Mucosa of descending colon (tissue), 3 donors: ENCODE measurements at regions of chr17 and their contacts with region 1.

Region 1: DNA sequence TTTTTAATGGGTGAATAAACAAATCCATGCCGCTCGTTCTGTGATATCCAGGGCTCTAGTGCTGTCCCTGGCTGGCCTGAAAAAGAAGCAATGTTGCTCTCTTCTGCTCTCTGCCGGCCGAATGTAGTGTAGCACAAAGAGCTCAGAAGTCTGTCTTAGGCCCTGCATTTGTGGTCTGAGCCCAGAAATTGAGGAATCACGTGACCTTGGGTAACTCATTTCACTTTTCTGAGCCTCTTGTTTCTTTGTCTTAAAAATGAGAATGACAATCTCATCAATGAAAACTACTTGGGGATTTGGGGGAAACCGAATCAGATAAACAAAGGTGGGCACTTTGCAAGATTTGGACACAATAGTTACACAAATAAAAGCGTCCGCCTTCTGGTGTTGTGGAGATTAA is 381.6 kb upstream of the ASIC2 start:
- DNase-seq: peak in 2 of 3 donors; percentile 60 to 75
- ATAC-seq: peak; percentile 76
- H3K4me3 ChIP-seq: no peak overlapping the region
- H3K4me1 ChIP-seq: no peaks in the 10 kb centered on the region
- CTCF ChIP-seq: peak; percentile 61

Region 2: DNA sequence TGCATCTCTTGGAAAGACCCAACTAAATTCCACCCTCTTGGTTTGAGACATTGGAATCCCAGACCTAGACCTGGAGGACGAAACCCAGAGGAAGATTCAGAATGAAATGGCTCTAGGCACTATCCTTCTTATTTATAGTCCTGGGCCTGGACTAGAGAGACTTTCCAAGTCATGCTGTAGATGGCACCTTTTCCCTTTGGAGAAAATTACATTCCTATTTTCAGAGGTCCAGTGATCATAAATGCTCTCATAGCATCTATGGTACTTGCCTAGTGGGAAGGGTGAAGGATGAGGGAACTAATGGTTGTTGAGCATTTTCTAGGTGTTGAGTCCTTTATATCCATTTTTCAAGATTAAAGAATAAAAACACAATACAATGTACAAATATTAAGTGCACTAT is 645.9 kb before region 1 on chr17:
- intact Hi-C with region 1: loop called in 1 of 2 experiments (anchors 5 kb)
- DNase-seq: no peak
- ATAC-seq: no peak
- H3K4me3 ChIP-seq: no peak overlapping the region
- H3K4me1 ChIP-seq: no peaks in the 10 kb centered on the region
- CTCF ChIP-seq: no peak

Region 3: DNA sequence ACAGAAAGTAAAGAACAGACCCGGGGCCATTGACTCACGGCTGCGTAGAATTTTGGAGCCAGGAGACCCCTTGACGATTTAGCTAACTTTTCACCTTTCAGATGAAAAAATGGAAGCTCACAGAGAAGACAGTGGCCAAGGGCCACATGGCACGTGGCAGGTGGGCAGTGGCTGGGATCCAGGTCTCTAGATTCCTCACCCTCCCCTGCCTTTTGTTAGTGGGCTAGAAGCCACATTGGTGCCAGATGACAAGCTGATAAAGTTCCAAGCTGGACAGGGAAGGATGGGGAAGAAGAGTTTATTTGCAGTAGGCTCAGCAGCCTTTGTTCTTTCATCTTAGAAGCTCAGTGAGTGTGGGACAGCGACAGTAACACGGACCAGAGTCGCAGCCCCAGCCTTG is 577.3 kb before region 1 on chr17:
- intact Hi-C with region 1: loop called in 1 of 2 experiments (anchors 5 kb)
- DNase-seq: no peak
- ATAC-seq: no peak
- H3K4me3 ChIP-seq: no peak overlapping the region
- H3K4me1 ChIP-seq: no peaks in the 10 kb centered on the region
- CTCF ChIP-seq: no peak